ENCODE measurements at regions of chrX and their contacts with region 1.

Region 1: GRCh38 chrX:41258226-41258625 is 75.7 kb upstream of the DDX3X start:
- DNase-seq: no peak
- H3K4me3 ChIP-seq: no peak overlapping the region
- H3K27ac ChIP-seq: no peak overlapping the region
- H3K4me1 ChIP-seq: no peaks in the 10 kb centered on the region
- H3K27me3 ChIP-seq: no peaks in the 10 kb centered on the region
- CTCF ChIP-seq: no peak
- POLR2A ChIP-seq: no peak

Region 2: DNA sequence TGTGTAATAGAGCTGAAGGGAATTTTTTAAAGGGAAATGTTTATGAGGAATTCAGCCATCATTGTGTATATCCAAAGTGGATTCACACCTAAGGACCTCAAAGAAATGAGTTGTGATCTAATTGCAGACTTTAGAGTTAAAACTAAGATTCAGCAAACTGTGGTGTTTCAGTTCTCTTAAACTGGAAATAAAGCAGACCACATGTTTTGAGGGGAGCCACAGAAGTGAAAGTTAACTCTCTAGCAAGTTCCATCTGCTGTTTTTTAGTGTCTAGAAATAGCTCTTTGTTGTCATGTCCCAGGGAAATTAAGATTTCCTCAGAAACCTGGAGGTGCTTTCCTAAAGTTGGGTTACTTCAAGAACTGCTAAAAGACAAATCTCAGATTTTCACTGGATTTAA is 21.6 kb before region 1 on chrX:
- CTCF ChIA-PET with region 1: interaction called, 6 read pairs
- POLR2A ChIA-PET with region 1: no interaction called
- dilution Hi-C with region 1: no loop called
- intact Hi-C with region 1: loop called (anchors 2 kb)
- DNase-seq: no peak
- H3K4me3 ChIP-seq: no peak overlapping the region
- H3K27ac ChIP-seq: no peak overlapping the region
- H3K4me1 ChIP-seq: peaks cover 8% of the 10 kb centered on the region
- H3K27me3 ChIP-seq: no peaks in the 10 kb centered on the region
- CTCF ChIP-seq: no peak
- POLR2A ChIP-seq: no peak